ENCODE measurements at regions of chr20 and their contacts with region 1.

Region 1: DNA sequence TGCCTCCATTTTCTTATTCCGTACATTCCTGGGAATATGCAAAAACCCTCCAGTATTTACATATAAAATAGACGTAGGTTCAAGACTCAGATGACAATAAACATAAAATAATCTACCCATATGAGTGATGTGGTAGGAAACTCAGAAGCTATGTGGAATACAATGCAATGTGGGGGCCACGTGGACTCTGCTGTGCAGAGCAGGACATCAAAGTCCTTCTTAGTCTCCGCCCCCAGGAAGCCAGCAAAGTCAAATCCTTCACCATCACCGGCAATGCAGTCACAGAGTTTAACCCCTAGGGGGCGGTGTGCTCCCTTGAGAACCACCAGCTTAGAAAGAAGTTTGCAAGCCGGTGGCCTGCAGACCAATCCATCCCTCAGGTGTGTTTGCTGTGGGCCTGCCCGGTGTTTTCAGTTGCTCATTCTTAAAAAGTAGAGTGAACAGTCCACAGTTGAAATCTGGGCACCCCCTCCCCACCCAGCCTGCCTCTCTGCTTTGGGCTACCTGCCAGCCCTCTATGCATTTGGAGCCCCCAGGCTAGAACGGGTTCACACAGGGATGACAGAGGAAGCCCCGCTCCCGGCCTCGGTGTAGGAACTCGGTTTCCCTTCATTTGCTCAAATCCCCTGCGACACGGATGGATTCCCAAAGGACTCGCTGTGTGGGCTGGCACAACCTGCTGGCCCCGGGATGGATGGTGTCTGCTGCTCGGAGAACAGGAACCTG is 59.9 kb downstream of the SULF2 start:
- DNase-seq: peak; percentile 81
- H3K4me3 ChIP-seq: peak overlapping the region in 1 of 2 experiments; percentile 25; a peak in 1 of 4 replicates
- H3K27ac ChIP-seq: no peak overlapping the region
- H3K4me1 ChIP-seq: peaks cover 0 to 7% of the 10 kb centered on the region in 2 experiments; a peak in 1 of 4 replicates
- H3K27me3 ChIP-seq: no peaks in the 10 kb centered on the region
- CTCF ChIP-seq: peak; percentile 85
- EP300 ChIP-seq: no peak
- RAD21 ChIP-seq: peak; percentile 89

Region 2: DNA sequence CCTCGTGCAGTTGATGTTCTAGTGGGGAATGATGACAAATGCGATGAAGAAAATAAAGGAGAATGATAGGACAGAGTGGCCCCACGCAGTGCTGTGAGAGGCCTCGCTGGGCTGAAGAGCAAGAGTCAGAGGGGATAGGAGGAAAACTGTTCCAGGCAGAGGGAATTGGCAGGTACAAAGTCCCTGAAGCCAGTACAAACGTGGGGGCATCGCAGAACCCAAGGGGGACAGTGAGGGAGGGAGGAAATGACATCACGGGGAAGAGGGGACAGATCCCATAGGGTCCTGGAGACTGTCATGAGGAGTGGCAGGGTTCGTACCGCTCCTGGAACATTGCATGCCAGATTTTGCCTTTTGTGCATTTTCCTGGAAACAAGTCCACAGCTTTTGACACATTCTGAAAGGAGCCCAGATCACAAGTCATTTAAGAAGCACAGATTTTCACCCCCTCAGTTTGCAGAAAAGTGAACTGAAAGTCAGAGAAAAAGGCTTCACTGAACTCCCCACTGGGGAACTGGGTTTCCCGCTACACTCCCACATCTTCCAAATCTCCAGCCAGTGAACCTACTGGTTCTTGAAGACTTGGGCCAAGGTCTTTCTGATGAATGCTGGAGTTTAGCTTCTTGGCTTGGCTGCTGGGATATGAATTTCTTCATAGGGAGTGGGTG is 17.1 kb before region 1 on chr20:
- CTCF ChIA-PET with region 1: interaction called, 11 read pairs
- POLR2A ChIA-PET with region 1: no interaction called
- DNase-seq: no peak
- H3K4me3 ChIP-seq: no peak overlapping the region
- H3K27ac ChIP-seq: peak overlapping the region in 1 of 2 experiments; percentile 90; a peak in 2 of 4 replicates
- H3K4me1 ChIP-seq: peaks cover 0 to 47% of the 10 kb centered on the region in 2 experiments; a peak in 2 of 4 replicates
- H3K27me3 ChIP-seq: no peaks in the 10 kb centered on the region
- CTCF ChIP-seq: no peak
- EP300 ChIP-seq: no peak
- RAD21 ChIP-seq: no peak

Region 3: DNA sequence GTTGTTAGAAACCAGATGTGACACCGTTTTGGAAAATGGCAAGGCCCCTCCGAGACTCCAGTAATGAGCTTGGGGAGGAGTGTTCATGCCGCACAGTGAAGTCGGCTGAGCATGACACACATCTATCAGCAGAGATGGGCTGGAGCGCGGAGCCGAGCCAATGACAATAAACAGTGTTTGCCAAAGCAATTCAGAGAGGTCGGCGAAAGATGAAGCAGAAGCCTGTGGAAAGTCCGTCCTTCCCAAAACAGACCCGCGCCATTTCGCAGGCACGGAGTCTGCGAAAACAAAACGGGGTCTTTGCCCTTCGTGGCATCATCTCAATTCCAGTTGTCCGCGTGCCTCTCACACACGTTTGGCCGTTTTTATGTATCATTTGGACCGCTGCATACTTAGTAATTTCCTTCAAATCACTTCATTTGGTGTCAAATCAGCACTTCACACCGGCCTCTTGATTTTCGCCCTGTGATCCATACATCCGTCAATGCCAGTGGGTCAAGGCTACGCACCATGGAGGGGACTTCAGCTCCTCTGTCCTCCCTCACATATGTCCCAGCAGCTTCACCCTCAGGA is 11.4 kb before region 1 on chr20:
- CTCF ChIA-PET with region 1: interaction called, 11 read pairs
- POLR2A ChIA-PET with region 1: no interaction called
- DNase-seq: no peak
- H3K4me3 ChIP-seq: no peak overlapping the region
- H3K27ac ChIP-seq: no peak overlapping the region
- H3K4me1 ChIP-seq: peaks cover 0 to 32% of the 10 kb centered on the region in 2 experiments; a peak in 2 of 4 replicates
- H3K27me3 ChIP-seq: no peaks in the 10 kb centered on the region
- CTCF ChIP-seq: no peak
- EP300 ChIP-seq: no peak
- RAD21 ChIP-seq: no peak